Activated CD8-positive, alpha-beta memory T cell treated with anti-CD3 and anti-CD28 coated beads, Interleukin-2, amount 10 ng/mL, durations not matched to agents 7 days and 5 days (primary cell): ENCODE measurements at regions of chr7 and their contacts with region 1.

Region 1: GRCh38 chr7:6589829-6590644 is at the start of gene INTS15:
- DNase-seq: peak; percentile 83
- ATAC-seq: peak; percentile 92
- H3K4me3 Mint-ChIP-seq: peak within 1 kb of the TSS; percentile 86
- H3K27ac Mint-ChIP-seq: peak within 1 kb of the TSS; percentile 80
- H3K4me1 Mint-ChIP-seq: peaks cover 26% of the 10 kb centered on the region
- H3K27me3 Mint-ChIP-seq: no peaks in the 10 kb centered on the region
- total RNA-seq, gene INTS15: 40.4 to 42.4 TPM

Region 2: GRCh38 chr7:6430271-6430940 is 159.6 kb before region 1 on chr7:
- CTCF ChIA-PET with region 1: no interaction called
- DNase-seq: no peak
- ATAC-seq: peak; percentile 49
- H3K4me3 Mint-ChIP-seq: no peak overlapping the region
- H3K27ac Mint-ChIP-seq: no peak overlapping the region
- H3K4me1 Mint-ChIP-seq: peaks cover 7% of the 10 kb centered on the region
- H3K27me3 Mint-ChIP-seq: no peaks in the 10 kb centered on the region

Region 3: DNA sequence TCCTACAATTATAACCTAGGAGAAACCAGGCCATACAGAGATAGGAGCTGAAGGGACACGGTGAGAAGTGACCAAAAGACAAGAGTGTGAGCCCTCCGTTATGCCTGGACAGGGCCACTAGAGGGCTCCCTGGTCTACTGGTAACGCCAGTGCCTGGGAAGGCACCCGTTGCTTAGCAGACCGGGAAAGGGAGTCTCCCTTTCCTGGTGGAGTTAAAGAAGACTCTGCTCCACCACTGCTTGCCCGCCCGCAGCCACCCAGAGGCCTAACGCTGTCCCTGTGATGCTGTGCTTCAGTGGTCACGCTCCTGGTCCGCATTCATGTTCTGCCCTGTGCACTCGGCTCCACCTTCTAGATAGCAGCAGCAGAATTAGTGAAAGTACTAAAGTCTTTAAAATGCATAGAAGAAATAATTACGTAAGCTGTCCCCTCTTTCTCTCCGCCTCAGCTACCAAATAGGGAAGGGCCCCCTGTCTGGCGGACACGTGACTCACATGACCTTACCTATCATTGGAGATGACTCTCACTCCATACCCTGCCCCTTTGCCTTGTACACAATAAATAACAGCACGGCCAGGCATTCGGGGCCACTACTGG is 73.6 kb before region 1 on chr7:
- CTCF ChIA-PET with region 1: interaction called, 15 read pairs
- DNase-seq: peak; percentile 81
- ATAC-seq: peak; percentile 81
- H3K4me3 Mint-ChIP-seq: peak overlapping the region; percentile 70
- H3K27ac Mint-ChIP-seq: no peak overlapping the region
- H3K4me1 Mint-ChIP-seq: peaks cover 7% of the 10 kb centered on the region
- H3K27me3 Mint-ChIP-seq: peaks cover 5% of the 10 kb centered on the region

Region 4: GRCh38 chr7:6600093-6600492 is 10.1 kb after region 1 on chr7:
- CTCF ChIA-PET with region 1: interaction called, 14 read pairs
- DNase-seq: no peak
- ATAC-seq: no peak
- H3K4me3 Mint-ChIP-seq: no peak overlapping the region
- H3K27ac Mint-ChIP-seq: no peak overlapping the region
- H3K4me1 Mint-ChIP-seq: no peaks in the 10 kb centered on the region
- H3K27me3 Mint-ChIP-seq: no peaks in the 10 kb centered on the region

Region 5: GRCh38 chr7:6631605-6632004 is 41.6 kb after region 1 on chr7:
- CTCF ChIA-PET with region 1: no interaction called
- DNase-seq: no peak
- ATAC-seq: no peak
- H3K4me3 Mint-ChIP-seq: no peak overlapping the region
- H3K27ac Mint-ChIP-seq: no peak overlapping the region
- H3K4me1 Mint-ChIP-seq: peaks cover 6% of the 10 kb centered on the region
- H3K27me3 Mint-ChIP-seq: no peaks in the 10 kb centered on the region

Region 6: GRCh38 chr7:6729492-6730342 is 139.7 kb after region 1 on chr7:
- CTCF ChIA-PET with region 1: no interaction called
- DNase-seq: peak; percentile 90
- ATAC-seq: peak; percentile 99
- H3K4me3 Mint-ChIP-seq: peak overlapping the region; percentile 85
- H3K27ac Mint-ChIP-seq: peak overlapping the region; percentile 84
- H3K4me1 Mint-ChIP-seq: peaks cover 25% of the 10 kb centered on the region
- H3K27me3 Mint-ChIP-seq: no peaks in the 10 kb centered on the region